ENCODE measurements at regions of chr16 and their contacts with region 1.

Region 1: DNA sequence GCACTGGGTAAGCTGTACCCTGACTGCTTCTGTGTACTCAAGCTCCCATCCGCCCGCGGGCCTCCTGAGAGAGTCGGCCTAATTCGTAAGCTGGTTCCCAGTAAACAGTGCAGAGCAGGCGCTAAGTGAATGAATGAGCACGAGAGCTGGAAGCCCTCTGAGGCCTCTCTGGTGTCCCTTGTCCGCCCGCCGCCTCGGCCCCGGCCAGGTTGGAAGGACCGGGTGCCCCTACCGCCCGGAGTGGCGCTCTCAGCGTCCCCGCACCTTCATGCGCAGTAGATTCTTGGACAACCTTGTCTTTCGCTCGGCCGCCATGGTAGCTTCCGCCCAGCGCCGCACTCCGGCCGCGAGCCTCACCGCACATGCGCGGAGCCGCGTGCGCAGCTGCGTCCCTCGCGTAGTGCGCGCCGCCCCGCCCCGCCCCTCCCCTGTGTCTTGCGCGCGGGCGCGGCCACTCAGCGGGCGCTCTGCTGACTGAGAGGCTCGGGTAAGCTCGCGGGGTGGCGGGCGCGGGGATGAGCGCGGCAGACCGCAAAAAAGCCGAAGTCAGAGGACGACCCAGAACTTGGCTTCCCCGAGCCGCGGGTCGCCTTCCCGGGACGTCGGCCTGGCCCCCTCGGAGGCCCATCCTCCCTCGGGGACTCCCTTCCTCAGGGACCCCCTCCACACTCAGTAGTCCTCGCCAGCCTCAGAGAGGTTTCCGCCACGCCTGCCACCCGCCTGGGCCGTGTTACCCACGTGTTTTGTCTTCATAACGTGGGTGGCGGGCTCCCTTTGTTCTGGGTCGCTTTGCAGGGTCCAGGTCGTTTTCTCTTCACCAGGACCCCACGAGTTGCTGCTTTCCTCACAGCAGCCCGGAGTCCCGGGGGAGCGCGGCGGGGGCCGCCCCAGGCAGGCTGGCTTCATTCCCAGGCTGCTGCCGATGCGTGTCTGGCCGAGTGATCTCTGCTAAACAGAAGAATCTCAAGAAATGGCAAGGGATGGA is at the start of gene MPHOSPH6:
- DNase-seq: peak; percentile 91
- H3K4me3 ChIP-seq: peak within 1 kb of the TSS; percentile 84 to 100 (median 89)
- H3K27ac ChIP-seq: peak within 1 kb of the TSS; percentile 93
- H3K4me1 ChIP-seq: peaks cover 16% of the 10 kb centered on the region
- H3K27me3 ChIP-seq: no peaks in the 10 kb centered on the region
- CTCF ChIP-seq: no peak
- total RNA-seq, gene MPHOSPH6: 39.3 to 68.1 TPM

Region 2: GRCh38 chr16:82192665-82193064 is 22.5 kb after region 1 on chr16:
- CTCF ChIA-PET with region 1: interaction called, 19 read pairs
- dilution Hi-C with region 1: no loop called
- in situ Hi-C with region 1: no loop called
- intact Hi-C with region 1: no loop called
- DNase-seq: peak; percentile 82
- H3K4me3 ChIP-seq: no peak overlapping the region
- H3K27ac ChIP-seq: peak overlapping the region; percentile 66
- H3K4me1 ChIP-seq: peaks cover 17% of the 10 kb centered on the region
- H3K27me3 ChIP-seq: no peaks in the 10 kb centered on the region
- CTCF ChIP-seq: no peak

Region 3: DNA sequence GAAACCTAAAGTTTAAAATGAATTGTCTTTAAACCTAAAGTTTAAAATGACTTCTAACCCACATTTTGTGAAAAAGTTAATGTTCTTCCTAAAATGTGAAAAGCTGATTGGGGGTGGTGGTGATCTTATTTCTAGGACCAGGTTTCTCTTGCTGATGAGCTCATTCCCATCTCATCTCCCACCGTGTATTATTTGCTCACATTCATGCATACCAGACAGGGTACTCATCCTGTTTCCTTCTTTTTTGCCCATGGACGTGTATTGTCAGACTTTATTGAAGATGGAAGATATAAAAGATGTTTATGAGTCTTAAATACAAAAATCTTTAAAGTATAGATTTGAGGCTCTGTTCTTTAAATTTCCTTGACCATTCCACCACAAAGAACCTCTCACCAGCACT is 70.0 kb after region 1 on chr16:
- CTCF ChIA-PET with region 1: no interaction called
- dilution Hi-C with region 1: no loop called
- in situ Hi-C with region 1: no loop called
- intact Hi-C with region 1: no loop called
- DNase-seq: peak; percentile 23
- H3K4me3 ChIP-seq: no peak overlapping the region
- H3K27ac ChIP-seq: no peak overlapping the region
- H3K4me1 ChIP-seq: no peaks in the 10 kb centered on the region
- H3K27me3 ChIP-seq: peaks cover 2% of the 10 kb centered on the region
- CTCF ChIP-seq: no peak